Sciatic nerve (tissue), 2 donors: ENCODE measurements at regions of chr1 and their contacts with region 1.

Region 1: DNA sequence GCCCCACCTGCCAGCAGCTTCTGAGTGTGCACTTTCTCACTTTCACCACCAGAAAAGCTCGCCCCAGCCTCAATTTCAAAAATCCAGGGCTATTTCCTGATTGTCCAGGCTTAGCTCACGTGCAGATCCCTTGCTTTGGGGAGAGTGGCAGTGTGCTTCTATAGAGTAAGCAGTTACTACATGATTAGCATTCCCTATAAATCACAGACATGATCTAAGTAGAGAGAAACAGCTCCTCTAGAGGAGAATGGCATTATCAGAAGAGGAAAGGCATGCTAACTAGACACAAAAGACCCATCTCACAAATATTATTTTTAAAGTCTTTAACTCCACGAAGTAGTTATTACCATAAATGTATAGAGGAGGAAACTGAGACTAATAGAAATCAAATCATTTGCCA is 455.9 kb upstream of the PKN2 start:
- DNase-seq: no peak
- ATAC-seq: no peak

Region 2: GRCh38 chr1:88043834-88044233 is 184.3 kb before region 1 on chr1:
- intact Hi-C with region 1: no loop called
- DNase-seq: no peak
- ATAC-seq: no peak

Region 3: DNA sequence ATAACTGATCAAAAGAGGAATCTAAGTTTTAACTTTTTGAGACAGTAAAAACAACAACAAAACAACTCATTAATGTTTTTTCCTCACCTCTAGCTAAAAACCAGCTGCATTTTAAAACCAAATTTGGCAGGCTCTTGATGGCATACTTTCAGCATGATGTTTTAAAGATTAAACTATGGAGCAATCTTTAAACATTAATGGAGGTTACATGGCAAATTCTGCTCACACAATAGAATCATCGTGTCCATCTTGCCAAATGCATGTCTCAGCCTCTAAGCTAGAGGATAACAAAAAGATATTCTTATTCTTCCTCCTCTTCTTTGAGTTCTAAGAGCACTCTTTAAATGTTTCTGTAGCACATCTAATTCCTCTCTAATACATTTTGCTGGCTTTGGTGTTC is 123.9 kb before region 1 on chr1:
- intact Hi-C with region 1: no loop called
- DNase-seq: no peak
- ATAC-seq: no peak

Region 4: DNA sequence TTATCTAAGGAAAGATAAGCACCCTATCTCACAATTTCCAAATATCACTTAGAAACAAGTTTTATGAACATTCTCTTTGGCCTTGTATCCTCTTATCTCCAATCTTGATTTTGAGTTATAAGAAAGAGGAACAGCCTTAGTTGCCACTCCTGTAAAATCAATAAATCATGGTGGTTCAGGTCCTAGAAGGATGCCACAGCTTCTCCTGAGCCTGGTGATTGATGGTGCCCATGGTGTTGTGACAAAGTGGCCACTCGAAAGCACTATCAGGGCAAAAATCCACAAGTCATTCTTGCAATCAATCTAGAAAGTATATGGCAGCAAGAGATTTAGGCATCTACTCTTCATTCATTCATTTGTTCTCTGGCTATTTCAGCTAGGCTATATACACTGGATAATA is 1163.5 kb after region 1 on chr1:
- intact Hi-C with region 1: loop called (anchors 10 kb)
- DNase-seq: no peak
- ATAC-seq: no peak